PC-9 (cell line): ENCODE measurements at regions of chr10 and their contacts with region 1.

Region 1: DNA sequence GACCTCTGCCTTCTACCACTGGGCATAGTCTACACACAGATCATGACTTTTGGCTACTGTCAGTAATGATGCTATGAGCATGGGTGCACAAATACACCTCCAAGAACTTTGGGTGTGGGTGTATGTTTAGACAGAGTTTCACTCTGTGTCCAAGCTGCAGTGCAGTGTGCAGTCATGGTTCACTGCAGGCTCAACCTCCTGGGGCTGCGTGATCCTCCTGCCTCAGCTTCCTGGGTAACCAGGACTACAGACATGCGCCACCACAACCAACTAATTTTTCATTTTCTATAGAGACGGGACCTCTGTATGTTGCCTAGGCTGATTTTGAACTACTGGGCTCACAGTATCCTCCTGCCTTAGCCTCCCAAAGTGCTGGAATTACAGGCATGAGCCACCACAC is 194.4 kb downstream of the NSUN6 start:
- DNase-seq: no peak
- H3K4me3 ChIP-seq: no peak overlapping the region
- H3K27ac ChIP-seq: no peak overlapping the region
- H3K4me1 ChIP-seq: no peaks in the 10 kb centered on the region
- H3K27me3 ChIP-seq: no peaks in the 10 kb centered on the region
- CTCF ChIP-seq: no peak

Region 2: DNA sequence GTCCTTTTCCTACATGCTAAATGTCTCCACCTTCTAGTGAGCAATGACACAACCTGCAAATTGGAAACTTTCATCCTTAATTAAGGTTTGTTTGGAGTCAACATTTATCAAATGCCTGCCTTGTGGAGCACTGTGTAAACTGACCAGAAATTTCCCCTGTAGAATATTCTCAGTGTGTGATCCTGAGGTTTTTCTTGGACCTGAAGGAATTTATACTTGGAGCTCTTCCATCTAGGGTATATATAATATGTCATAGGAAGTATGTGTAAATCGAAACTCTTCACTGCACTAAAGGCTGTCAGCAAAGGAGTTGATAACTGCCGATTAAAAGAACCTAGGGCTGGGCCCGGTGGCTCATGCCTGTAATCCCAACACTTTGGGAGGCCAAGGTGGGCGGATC is 42.0 kb after region 1 on chr10:
- CTCF ChIA-PET with region 1: no interaction called
- POLR2A ChIA-PET with region 1: interaction called, 51 read pairs
- intact Hi-C with region 1: no loop called
- DNase-seq: no peak
- H3K4me3 ChIP-seq: no peak overlapping the region
- H3K27ac ChIP-seq: no peak overlapping the region
- H3K4me1 ChIP-seq: no peaks in the 10 kb centered on the region
- H3K27me3 ChIP-seq: no peaks in the 10 kb centered on the region; the same call in 1 of the 2 replicates
- CTCF ChIP-seq: no peak